Prostate gland (tissue), 2 donors: ENCODE measurements at regions of chr9 and their contacts with region 1.

Region 1: DNA sequence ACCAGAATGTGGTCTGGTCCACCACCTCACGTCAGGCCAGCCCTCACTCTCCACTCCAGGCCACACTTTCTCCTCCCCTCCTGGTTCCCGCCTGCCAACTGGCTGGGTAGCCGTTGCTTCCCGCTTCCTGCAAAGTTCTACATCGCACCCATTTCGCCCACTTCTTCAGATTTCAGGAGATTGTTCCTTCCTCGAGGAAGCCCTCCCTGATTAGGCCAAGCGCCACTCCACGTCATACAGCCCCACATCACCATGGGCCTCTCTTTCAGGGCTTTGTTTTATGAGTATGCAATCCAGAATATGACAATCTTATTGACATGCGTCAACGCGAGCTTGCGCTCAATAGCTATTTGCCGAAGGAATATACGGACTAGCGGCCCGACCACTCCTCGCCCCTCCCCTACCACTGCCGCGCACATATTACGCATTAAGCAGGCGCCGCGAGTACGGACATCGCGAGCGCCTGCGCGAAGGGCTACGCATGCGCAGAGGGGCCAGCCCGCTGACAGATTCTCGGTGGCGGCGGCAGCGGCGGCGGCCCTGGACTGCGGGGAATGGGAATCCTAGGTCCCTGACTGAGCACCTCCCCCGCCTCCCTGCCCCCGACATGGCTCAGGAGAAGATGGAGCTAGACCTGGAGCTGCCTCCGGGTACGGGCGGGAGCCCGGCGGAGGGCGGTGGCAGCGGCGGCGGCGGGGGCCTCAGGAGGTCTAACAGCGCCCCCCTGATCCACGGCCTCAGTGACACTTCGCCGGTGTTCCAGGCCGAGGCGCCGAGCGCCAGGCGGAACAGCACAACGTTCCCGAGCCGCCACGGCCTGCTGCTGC is 74.7 kb downstream of the PIP5K1B start:
- DNase-seq: peak; percentile 85
- H3K4me3 ChIP-seq: peak overlapping the region; percentile 71 to 72
- H3K27ac ChIP-seq: peak overlapping the region; percentile 89 to 90
- H3K4me1 ChIP-seq: no peaks in the 10 kb centered on the region
- H3K27me3 ChIP-seq: no peaks in the 10 kb centered on the region
- CTCF ChIP-seq: peak; percentile 18 to 52 (median 39)
- POLR2A ChIP-seq: peak; percentile 81

Region 2: GRCh38 chr9:68619636-68620035 is 160.1 kb before region 1 on chr9:
- intact Hi-C with region 1: no loop called
- DNase-seq: no peak
- H3K4me3 ChIP-seq: no peak overlapping the region
- H3K27ac ChIP-seq: no peak overlapping the region
- H3K4me1 ChIP-seq: no peaks in the 10 kb centered on the region
- H3K27me3 ChIP-seq: no peaks in the 10 kb centered on the region
- CTCF ChIP-seq: no peak
- POLR2A ChIP-seq: no peak

Region 3: DNA sequence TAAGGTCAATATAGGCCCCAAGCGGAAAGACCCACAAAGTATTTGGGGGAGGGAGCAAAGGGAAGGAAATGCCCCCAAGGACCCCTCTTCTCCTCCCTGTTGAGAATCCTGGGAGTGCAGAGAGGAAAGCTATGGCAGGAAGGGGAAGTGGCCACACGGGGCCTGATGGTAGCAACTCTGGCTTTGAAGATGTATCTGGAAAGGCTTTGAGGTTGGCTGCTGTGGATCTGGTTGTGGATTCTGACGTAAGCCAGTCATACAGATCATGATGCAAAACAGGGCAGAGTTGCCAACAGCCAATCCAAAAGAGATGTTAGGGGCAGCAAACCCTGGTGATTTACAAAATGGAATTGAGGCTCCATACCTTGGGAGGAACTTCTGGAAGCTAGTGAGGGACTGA is 125.4 kb after region 1 on chr9:
- intact Hi-C with region 1: no loop called
- DNase-seq: no peak
- H3K4me3 ChIP-seq: no peak overlapping the region
- H3K27ac ChIP-seq: no peak overlapping the region
- H3K4me1 ChIP-seq: no peaks in the 10 kb centered on the region
- H3K27me3 ChIP-seq: no peaks in the 10 kb centered on the region
- CTCF ChIP-seq: no peak
- POLR2A ChIP-seq: no peak

Region 4: DNA sequence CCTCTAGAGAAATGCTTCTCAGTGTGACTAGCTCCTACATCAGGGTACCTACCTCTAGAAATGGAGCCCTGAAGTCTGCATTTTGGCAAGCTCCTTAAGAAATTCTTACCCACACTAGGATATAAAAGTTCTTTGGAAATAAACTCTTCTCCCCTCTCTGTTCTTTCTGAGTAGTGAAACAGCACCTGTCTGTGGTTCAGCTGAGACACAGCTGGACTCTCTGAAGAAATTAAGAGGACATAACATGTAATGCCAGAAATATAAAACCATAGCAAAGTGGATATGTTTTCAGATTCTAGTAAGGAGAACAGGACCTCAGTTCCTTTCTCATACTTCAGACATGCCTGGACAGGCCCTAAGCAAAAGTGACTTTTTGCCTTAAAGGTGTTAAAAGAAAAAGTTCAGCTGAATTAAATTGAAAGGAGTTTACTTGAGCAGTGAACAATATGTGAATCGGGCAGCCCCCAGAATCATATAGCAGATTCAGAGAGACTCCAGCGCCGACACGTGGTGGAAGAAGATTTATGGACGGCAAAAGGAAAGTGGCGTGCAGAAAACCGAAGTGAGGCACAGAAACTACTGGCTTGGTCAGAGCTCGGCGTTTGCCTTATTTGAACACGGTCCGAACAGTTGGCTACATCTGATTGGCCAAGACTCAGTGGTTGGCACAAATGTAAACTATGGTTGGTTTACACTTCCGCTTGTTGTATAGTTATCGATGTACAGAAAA is 169.7 kb after region 1 on chr9:
- intact Hi-C with region 1: loop called (anchors 10 kb)
- DNase-seq: peak; percentile 41
- H3K4me3 ChIP-seq: no peak overlapping the region
- H3K27ac ChIP-seq: no peak overlapping the region
- H3K4me1 ChIP-seq: no peaks in the 10 kb centered on the region
- H3K27me3 ChIP-seq: no peaks in the 10 kb centered on the region
- CTCF ChIP-seq: peak in 3 of 4 experiments; percentile 22 to 58 (median 49)
- POLR2A ChIP-seq: no peak

Region 5: DNA sequence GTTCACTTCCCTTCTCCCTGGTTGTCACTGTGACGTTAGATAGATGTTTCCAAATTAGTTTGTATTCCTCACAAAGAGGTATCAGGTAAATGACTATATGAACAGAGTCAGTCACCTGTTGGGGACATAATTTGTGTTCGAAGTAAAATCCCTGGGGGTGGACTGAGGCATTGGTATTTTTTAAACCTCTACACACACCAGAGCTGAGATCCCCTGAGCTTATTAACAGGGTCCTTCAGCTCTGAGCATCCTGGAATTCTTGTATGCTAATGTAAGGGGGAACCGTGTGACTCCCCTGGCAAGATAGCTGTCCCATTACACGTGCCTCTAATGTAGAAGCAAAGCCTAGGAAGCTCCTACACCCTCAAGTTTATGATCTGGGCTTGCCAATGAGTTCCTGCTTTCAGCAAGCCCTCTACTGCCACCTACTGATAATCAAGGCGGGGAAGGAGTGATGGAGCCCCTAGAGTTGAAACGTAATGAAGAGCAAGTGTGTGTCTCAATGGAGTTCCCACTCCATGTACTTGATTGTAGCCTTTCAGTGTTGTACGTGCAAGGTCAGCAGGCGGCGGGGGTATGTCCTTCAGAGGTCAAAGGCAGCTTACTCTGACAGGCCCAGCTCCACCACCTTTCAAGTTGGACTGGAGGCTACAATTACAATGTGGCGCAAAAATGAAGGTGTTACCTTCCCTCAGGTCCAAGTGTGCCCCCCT is 219.8 kb after region 1 on chr9:
- intact Hi-C with region 1: loop called (anchors 10 kb)
- DNase-seq: peak; percentile 68
- H3K4me3 ChIP-seq: no peak overlapping the region
- H3K27ac ChIP-seq: no peak overlapping the region
- H3K4me1 ChIP-seq: no peaks in the 10 kb centered on the region
- H3K27me3 ChIP-seq: no peaks in the 10 kb centered on the region
- CTCF ChIP-seq: peak; percentile 42 to 79 (median 76)
- POLR2A ChIP-seq: no peak

Region 6: GRCh38 chr9:69027355-69028096 is 247.8 kb after region 1 on chr9:
- intact Hi-C with region 1: loop called (anchors 5 kb)
- DNase-seq: peak; percentile 23
- H3K4me3 ChIP-seq: no peak overlapping the region
- H3K27ac ChIP-seq: no peak overlapping the region
- H3K4me1 ChIP-seq: no peaks in the 10 kb centered on the region
- H3K27me3 ChIP-seq: no peaks in the 10 kb centered on the region
- CTCF ChIP-seq: peak; percentile 23 to 65 (median 62)
- POLR2A ChIP-seq: no peak